K562 (cell line): ENCODE measurements at regions of chr22 and their contacts with region 1.

Region 1: GRCh38 chr22:45268958-45269844 is 15.5 kb upstream of the UPK3A start:
- DNase-seq: peak; percentile 78 to 87 (median 86)
- ATAC-seq: peak; percentile 96
- H3K4me3 ChIP-seq: 0 out of 2 replicates have a peak overlapping the region, but pooled peaks have one; percentile 6
- H3K27ac ChIP-seq: no peak overlapping the region
- H3K4me1 ChIP-seq: peaks cover 0 to 9% of the 10 kb centered on the region in 2 experiments; a peak in 3 of 5 replicates
- H3K27me3 ChIP-seq: no peaks in the 10 kb centered on the region
- CTCF ChIP-seq: peak; percentile 64 to 88 (median 75)
- EP300 ChIP-seq: no peak
- POLR2A ChIP-seq: no peak
- RAD21 ChIP-seq: peak; percentile 71 to 81

Region 2: DNA sequence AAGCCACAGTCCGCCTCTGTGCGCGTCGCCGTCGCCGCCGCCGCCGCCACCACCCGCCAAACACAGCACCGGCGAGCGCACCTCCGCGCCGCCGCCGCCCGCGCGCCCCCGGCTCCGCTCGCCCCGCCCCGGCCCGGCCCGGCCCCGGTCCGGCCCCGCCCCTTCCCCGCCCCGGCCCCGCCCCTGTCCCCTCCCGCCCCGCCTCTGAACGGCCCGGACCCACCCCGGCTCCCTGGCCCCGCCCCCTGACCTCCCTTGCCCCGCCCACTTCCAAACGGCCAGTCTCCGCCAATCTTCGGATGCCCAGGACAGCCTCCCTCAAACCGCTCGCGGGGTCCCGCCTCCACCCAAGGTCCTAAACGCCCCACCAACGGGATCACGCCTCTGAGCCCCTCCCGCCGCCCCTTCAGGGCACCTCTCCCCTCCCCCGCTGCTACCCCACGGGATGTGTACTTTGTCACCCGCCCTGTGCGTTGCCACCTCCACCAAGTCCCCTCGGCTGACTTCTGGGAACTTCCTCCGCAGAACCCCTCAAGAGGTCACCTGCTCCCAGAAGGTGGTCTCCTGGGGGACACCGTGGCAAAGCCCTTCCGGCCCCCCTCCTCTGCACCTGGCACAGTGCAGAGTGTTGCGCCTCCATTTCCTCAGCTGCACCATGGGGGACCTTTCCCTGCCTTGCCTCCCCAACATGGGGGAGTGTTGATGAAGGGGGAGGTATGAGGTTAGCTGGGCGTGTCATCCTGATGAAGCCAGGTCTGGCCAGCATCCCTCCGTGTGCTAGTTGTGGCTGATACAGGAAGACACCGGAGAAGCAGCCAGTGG is 28.2 kb before region 1 on chr22 and contains the start of gene KIAA0930:
- CTCF ChIA-PET with region 1: no interaction called
- POLR2A ChIA-PET with region 1: no interaction called
- in situ Hi-C with region 1: no loop called
- intact Hi-C with region 1: no loop called
- DNase-seq: peak; percentile 56 to 98 (median 96)
- ATAC-seq: peak; percentile 75
- H3K4me3 ChIP-seq: peak within 1 kb of the TSS; percentile 39
- H3K27ac ChIP-seq: no peak within 1 kb of the TSS
- H3K4me1 ChIP-seq: peaks cover 0 to 17% of the 10 kb centered on the region in 2 experiments; a peak in 3 of 5 replicates
- H3K27me3 ChIP-seq: no peaks in the 10 kb centered on the region
- CTCF ChIP-seq: no peak
- EP300 ChIP-seq: no peak
- POLR2A ChIP-seq: no peak
- RAD21 ChIP-seq: no peak
- polyA plus RNA-seq, gene KIAA0930: 0.24 to 0.46 TPM

Region 3: DNA sequence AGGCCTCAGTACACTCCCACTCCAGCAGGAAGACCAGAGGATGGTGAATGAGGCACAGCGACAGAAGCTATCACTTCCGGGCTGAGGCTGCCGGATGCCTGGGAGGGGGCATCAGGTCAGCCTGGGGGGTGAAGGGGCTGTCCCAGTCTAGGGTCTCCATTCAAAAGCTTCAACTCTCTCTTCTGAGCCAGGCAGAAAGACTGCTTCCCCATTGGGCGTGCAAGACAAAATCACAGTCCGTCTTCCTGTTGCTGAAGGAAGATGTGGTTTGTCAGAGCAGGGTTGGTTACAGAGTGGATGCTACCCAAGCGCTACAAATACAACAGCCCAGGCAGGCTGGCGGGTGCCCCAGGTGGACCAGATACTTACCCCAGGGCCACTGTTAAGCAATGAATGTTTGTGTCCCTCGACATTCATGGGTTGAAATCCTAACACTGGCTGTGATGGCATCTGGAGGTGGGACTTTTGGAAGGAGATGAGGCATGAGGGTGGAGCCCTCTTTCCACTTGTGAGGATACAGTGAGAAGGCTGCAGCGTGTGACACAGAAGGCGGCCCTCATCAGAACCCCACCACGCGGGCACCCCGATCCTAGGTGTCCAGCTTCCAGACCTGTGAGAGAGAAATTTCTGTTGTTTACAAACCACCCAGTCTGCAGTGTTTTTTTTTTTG is 27.6 kb after region 1 on chr22:
- CTCF ChIA-PET with region 1: no interaction called
- POLR2A ChIA-PET with region 1: no interaction called
- in situ Hi-C with region 1: no loop called
- intact Hi-C with region 1: no loop called
- DNase-seq: no peak
- ATAC-seq: no peak
- H3K4me3 ChIP-seq: no peak overlapping the region
- H3K27ac ChIP-seq: no peak overlapping the region
- H3K4me1 ChIP-seq: peaks cover 0 to 6% of the 10 kb centered on the region in 2 experiments; a peak in 3 of 5 replicates
- H3K27me3 ChIP-seq: peaks cover 0 to under 1% of the 10 kb centered on the region in 2 experiments; a peak in 2 of 5 replicates
- CTCF ChIP-seq: no peak
- EP300 ChIP-seq: no peak
- POLR2A ChIP-seq: no peak
- RAD21 ChIP-seq: no peak

Region 4: DNA sequence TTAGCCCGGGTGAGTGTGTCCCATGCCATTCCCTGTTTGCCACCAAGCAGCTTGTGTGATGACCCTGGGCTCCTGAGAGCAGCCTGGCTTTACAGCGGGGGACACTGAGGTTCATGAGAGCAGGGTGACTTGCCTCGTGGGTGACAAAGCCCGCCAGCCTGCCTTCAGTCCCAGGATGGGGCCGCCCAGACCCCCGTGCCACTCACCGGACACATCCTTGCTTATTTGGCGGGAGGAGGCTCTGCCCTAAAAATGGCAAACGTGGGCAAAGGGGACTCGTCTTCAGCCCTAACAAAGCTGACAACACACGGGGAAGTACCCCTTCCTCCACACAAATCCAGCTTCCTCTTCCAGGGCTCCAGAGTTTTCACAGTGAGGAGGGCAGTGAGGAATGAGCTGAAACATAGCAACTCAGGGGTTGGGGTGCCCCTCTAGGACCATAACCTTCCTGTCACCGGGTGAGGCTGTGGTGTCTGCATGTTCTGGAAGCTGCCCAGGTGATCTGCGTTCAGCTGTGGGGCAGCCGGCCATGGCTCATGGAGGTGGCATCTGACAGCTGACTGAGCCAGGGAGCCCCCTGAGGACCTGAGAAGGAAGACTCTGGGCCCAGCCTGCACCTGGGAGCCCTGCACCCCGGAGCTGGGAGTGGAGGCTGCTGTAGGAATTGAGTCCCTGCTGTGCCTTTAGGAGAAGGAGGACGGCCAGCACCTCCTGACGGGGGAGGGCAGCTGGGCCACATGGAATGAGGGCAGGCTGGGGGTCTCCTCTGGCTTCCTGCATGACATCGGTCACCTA is 161.0 kb after region 1 on chr22:
- CTCF ChIA-PET with region 1: interaction called, 15 read pairs
- POLR2A ChIA-PET with region 1: no interaction called
- in situ Hi-C with region 1: loop called (anchors 5 kb)
- intact Hi-C with region 1: loop called (anchors 1 kb)
- DNase-seq: no peak
- ATAC-seq: no peak
- H3K4me3 ChIP-seq: no peak overlapping the region
- H3K27ac ChIP-seq: no peak overlapping the region
- H3K4me1 ChIP-seq: no peaks in the 10 kb centered on the region
- H3K27me3 ChIP-seq: peaks cover 10 to 50% of the 10 kb centered on the region in 2 experiments; a peak in 4 of 5 replicates
- CTCF ChIP-seq: no peak
- EP300 ChIP-seq: no peak
- POLR2A ChIP-seq: no peak
- RAD21 ChIP-seq: no peak

Region 5: GRCh38 chr22:45435544-45436139 is 166.4 kb after region 1 on chr22:
- CTCF ChIA-PET with region 1: interaction called, 15 read pairs
- POLR2A ChIA-PET with region 1: no interaction called
- in situ Hi-C with region 1: loop called (anchors 5 kb)
- intact Hi-C with region 1: loop called (anchors 1 kb)
- DNase-seq: peak; percentile 60 to 80 (median 70)
- ATAC-seq: peak; percentile 93
- H3K4me3 ChIP-seq: no peak overlapping the region
- H3K27ac ChIP-seq: no peak overlapping the region
- H3K4me1 ChIP-seq: no peaks in the 10 kb centered on the region
- H3K27me3 ChIP-seq: peaks cover 2 to 15% of the 10 kb centered on the region in 2 experiments; a peak in 2 of 5 replicates
- CTCF ChIP-seq: peak; percentile 76 to 82 (median 79)
- EP300 ChIP-seq: no peak
- POLR2A ChIP-seq: no peak
- RAD21 ChIP-seq: peak; percentile 55 to 85

Region 6: GRCh38 chr22:45553351-45554039 is 284.3 kb after region 1 on chr22:
- CTCF ChIA-PET with region 1: interaction called, 4 read pairs
- POLR2A ChIA-PET with region 1: no interaction called
- in situ Hi-C with region 1: loop called (anchors 5 kb)
- intact Hi-C with region 1: loop called (anchors 2 kb)
- DNase-seq: peak; percentile 63 to 69 (median 68)
- ATAC-seq: peak; percentile 85
- H3K4me3 ChIP-seq: no peak overlapping the region
- H3K27ac ChIP-seq: no peak overlapping the region
- H3K4me1 ChIP-seq: peaks cover 0 to 7% of the 10 kb centered on the region in 2 experiments; a peak in 2 of 5 replicates
- H3K27me3 ChIP-seq: peaks cover 2 to 8% of the 10 kb centered on the region in 2 experiments; a peak in 1 of 5 replicates
- CTCF ChIP-seq: peak; percentile 79 to 90 (median 84)
- EP300 ChIP-seq: no peak
- POLR2A ChIP-seq: no peak
- RAD21 ChIP-seq: peak; percentile 41 to 79